ENCODE measurements at regions of chr18 and their contacts with region 1.

Region 1: DNA sequence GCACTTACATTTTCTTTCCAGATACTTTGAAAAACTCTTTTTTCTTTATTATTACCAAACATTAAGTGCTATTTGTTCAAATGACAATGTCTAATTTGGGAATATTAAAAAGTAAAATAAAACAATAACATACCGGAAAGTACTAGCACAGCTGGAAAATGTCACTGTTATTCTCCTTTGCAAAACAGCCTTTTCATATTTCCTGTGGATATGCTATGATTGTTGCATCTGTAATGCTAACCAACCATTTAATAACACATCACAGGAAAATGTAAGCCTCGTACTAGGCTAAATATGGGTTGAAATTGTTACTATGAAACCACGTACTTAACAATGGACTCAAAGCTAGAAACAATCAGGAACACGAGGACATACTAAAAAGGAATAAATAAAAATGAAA is 298.1 kb downstream of the CBLN2 start:
- DNase-seq: no peak
- ATAC-seq: no peak
- H3K4me3 Mint-ChIP-seq: no peak overlapping the region
- H3K27ac Mint-ChIP-seq: no peak overlapping the region
- H3K4me1 Mint-ChIP-seq: no peaks in the 10 kb centered on the region
- H3K27me3 Mint-ChIP-seq: no peaks in the 10 kb centered on the region
- CTCF ChIP-seq: no peak

Region 2: GRCh38 chr18:71322201-71322600 is 923.9 kb before region 1 on chr18:
- CTCF ChIA-PET with region 1: no interaction called
- POLR2A ChIA-PET with region 1: no interaction called
- intact Hi-C with region 1: loop called (anchors 5 kb)
- DNase-seq: no peak
- ATAC-seq: no peak
- H3K4me3 Mint-ChIP-seq: no peak overlapping the region
- H3K27ac Mint-ChIP-seq: no peak overlapping the region
- H3K4me1 Mint-ChIP-seq: no peaks in the 10 kb centered on the region
- H3K27me3 Mint-ChIP-seq: no peaks in the 10 kb centered on the region
- CTCF ChIP-seq: no peak